ENCODE measurements at regions of chr6 and their contacts with region 1.

Region 1: GRCh38 chr6:158220786-158221442 is 52.8 kb downstream of the GTF2H5 start:
- DNase-seq: peak; percentile 83
- ATAC-seq: peak; percentile 99
- H3K4me3 Mint-ChIP-seq: no peak overlapping the region
- H3K27ac Mint-ChIP-seq: no peak overlapping the region
- H3K4me1 Mint-ChIP-seq: peaks cover 4% of the 10 kb centered on the region
- H3K27me3 Mint-ChIP-seq: no peaks in the 10 kb centered on the region

Region 2: GRCh38 chr6:158231551-158232315 is 10.8 kb after region 1 on chr6:
- CTCF ChIA-PET with region 1: interaction called, 15 read pairs
- DNase-seq: peak; percentile 75
- ATAC-seq: peak; percentile 84
- H3K4me3 Mint-ChIP-seq: peak overlapping the region; percentile 84
- H3K27ac Mint-ChIP-seq: peak overlapping the region; percentile 87
- H3K4me1 Mint-ChIP-seq: peaks cover 22% of the 10 kb centered on the region
- H3K27me3 Mint-ChIP-seq: peaks cover 9% of the 10 kb centered on the region

Region 3: GRCh38 chr6:158290659-158291058 is 69.7 kb after region 1 on chr6:
- CTCF ChIA-PET with region 1: interaction called, 15 read pairs
- DNase-seq: peak; percentile 87
- ATAC-seq: peak; percentile 99
- H3K4me3 Mint-ChIP-seq: peak overlapping the region; percentile 66
- H3K27ac Mint-ChIP-seq: peak overlapping the region; percentile 95
- H3K4me1 Mint-ChIP-seq: peaks cover 48% of the 10 kb centered on the region
- H3K27me3 Mint-ChIP-seq: no peaks in the 10 kb centered on the region

Region 4: DNA sequence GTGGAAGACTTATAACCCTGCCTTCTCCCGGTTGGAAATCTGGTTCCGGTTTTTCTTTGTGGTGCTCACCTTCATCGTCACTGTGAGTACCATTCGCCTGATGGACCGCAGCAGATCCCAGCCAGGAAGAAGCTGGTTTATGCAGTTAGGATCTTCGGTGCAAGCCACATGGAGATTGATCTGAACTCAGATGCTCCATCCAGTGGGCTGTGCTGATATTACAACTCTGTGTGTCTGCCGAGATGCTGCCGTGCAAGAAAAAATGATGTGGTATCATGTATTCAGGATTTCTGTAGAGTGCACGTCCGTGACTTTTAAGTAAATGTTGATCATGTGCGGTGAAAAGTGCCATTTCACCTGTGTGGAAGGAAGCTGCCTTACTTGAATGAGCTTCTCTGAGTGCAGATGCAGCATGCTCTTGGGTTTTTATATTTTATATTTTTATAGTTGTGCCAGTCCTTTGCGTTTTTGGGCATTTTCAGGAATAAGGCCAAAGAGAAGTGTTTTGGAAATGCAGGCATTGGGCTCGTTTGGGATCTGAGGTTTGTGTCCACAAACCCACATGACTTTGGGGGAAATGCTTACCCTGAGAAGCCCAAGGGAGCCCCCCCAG is 384.5 kb after region 1 on chr6:
- CTCF ChIA-PET with region 1: interaction called, 16 read pairs
- DNase-seq: peak; percentile 70
- ATAC-seq: peak; percentile 61
- H3K4me3 Mint-ChIP-seq: no peak overlapping the region
- H3K27ac Mint-ChIP-seq: peak overlapping the region; percentile 19
- H3K4me1 Mint-ChIP-seq: peaks cover 3% of the 10 kb centered on the region
- H3K27me3 Mint-ChIP-seq: no peaks in the 10 kb centered on the region

Region 5: DNA sequence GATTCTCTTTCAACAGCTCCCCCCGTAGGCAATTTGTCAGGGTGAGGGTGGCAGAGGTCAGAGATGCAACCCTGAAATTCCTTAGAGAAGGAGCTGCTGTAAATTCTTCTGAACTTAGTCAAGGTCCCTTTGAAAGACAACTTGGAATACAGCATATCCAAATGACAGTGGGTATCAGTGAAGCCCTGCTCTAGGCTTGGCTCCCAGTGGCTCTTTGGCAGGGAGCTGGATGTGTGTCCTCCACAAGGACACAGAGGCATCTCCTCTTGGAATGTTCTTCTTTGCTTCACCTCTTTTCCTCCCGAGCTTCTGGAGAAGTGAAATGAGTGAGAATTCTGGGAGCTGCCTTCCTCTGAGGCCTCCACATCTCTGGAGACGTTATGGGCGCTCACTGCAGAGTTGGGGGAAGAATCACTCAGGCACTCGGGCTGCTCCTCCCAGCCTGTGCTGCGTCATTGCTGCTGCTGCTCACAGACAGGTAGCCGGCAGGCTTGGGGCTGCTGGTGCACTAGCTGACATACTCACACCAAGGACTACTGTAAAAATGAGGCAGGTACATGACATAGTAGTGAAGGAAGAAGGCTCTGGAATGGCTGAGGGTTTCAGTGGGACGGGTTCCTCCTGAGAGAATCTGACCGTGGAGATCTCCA is 389.5 kb after region 1 on chr6:
- CTCF ChIA-PET with region 1: interaction called, 16 read pairs
- DNase-seq: peak; percentile 36
- ATAC-seq: no peak
- H3K4me3 Mint-ChIP-seq: no peak overlapping the region
- H3K27ac Mint-ChIP-seq: no peak overlapping the region
- H3K4me1 Mint-ChIP-seq: peaks cover under 1% of the 10 kb centered on the region
- H3K27me3 Mint-ChIP-seq: no peaks in the 10 kb centered on the region

Region 6: GRCh38 chr6:158666628-158667359 is 445.9 kb after region 1 on chr6:
- CTCF ChIA-PET with region 1: no interaction called
- DNase-seq: peak; percentile 26
- ATAC-seq: no peak
- H3K4me3 Mint-ChIP-seq: no peak overlapping the region
- H3K27ac Mint-ChIP-seq: peak overlapping the region; percentile 29
- H3K4me1 Mint-ChIP-seq: peaks cover 16% of the 10 kb centered on the region
- H3K27me3 Mint-ChIP-seq: no peaks in the 10 kb centered on the region

Measured in activated CD8-positive, alpha-beta memory T cell treated with anti-CD3 and anti-CD28 coated beads, Interleukin-2, amount 10 ng/mL, durations not matched to agents 7 days and 5 days (primary cell).